Vagina (tissue), 2 donors: ENCODE measurements at regions of chr20 and their contacts with region 1.

Region 1: GRCh38 chr20:49610701-49611538 is 43.0 kb upstream of the PTGIS start:
- DNase-seq: no peak
- H3K4me3 ChIP-seq: peak overlapping the region in 1 of 2 donors; percentile 6
- H3K27ac ChIP-seq: no peak overlapping the region
- H3K4me1 ChIP-seq: peaks cover 10% of the 10 kb centered on the region
- H3K27me3 ChIP-seq: no peaks in the 10 kb centered on the region
- CTCF ChIP-seq: peak; percentile 97 to 100 (median 99)
- POLR2A ChIP-seq: no peak

Region 2: GRCh38 chr20:49338061-49338460 is 272.9 kb before region 1 on chr20:
- intact Hi-C with region 1: loop called (anchors 10 kb)
- DNase-seq: no peak
- H3K4me3 ChIP-seq: no peak overlapping the region
- H3K27ac ChIP-seq: no peak overlapping the region
- H3K4me1 ChIP-seq: no peaks in the 10 kb centered on the region
- H3K27me3 ChIP-seq: no peaks in the 10 kb centered on the region
- CTCF ChIP-seq: no peak
- POLR2A ChIP-seq: no peak

Region 3: DNA sequence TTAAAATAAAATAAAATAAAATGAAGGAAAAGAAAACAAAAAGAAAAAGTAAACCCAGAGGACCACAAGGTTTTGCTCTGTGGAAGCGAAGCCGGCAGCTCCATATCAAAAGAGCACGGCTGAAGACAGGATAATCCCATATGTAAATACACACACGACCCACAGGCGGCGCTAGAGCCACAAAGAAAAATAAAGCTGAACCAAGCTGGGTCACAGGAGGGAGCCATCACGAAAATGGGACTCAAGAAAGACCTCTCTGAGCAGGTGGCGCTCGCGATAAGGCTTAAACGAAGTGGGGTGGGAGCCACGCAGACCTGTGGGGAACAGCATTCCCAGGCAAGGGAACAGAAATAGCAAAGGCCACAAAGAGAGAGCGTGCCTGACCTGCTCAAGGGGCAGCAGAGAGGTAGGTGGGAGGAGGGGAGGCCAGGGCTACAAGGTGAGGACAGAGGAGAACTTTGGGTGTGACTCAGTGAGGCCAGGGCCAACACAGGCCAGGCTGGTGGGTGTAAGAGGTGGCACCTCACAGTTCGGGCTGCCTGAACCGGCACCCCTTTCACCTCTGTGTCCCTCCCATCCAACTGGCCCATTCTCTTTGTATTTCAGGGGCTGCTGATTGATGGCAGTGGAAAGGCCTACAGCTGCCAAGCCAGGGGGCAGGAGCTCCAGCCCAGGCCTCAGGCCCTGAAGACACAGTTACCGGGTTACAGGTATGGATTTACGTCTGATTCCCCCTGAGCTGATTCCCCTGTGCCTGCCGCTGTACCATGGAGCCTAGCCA is 69.0 kb before region 1 on chr20:
- intact Hi-C with region 1: loop called (anchors 2 kb)
- DNase-seq: no peak
- H3K4me3 ChIP-seq: no peak overlapping the region
- H3K27ac ChIP-seq: peak overlapping the region; percentile 5
- H3K4me1 ChIP-seq: no peaks in the 10 kb centered on the region
- H3K27me3 ChIP-seq: no peaks in the 10 kb centered on the region
- CTCF ChIP-seq: peak in 2 of 3 experiments; percentile 72 to 95
- POLR2A ChIP-seq: no peak

Region 4: GRCh38 chr20:49699200-49699992 is 88.5 kb after region 1 on chr20:
- intact Hi-C with region 1: no loop called
- DNase-seq: no peak
- H3K4me3 ChIP-seq: no peak overlapping the region
- H3K27ac ChIP-seq: no peak overlapping the region
- H3K4me1 ChIP-seq: peaks cover 63% of the 10 kb centered on the region
- H3K27me3 ChIP-seq: no peaks in the 10 kb centered on the region
- CTCF ChIP-seq: no peak
- POLR2A ChIP-seq: no peak

Region 5: DNA sequence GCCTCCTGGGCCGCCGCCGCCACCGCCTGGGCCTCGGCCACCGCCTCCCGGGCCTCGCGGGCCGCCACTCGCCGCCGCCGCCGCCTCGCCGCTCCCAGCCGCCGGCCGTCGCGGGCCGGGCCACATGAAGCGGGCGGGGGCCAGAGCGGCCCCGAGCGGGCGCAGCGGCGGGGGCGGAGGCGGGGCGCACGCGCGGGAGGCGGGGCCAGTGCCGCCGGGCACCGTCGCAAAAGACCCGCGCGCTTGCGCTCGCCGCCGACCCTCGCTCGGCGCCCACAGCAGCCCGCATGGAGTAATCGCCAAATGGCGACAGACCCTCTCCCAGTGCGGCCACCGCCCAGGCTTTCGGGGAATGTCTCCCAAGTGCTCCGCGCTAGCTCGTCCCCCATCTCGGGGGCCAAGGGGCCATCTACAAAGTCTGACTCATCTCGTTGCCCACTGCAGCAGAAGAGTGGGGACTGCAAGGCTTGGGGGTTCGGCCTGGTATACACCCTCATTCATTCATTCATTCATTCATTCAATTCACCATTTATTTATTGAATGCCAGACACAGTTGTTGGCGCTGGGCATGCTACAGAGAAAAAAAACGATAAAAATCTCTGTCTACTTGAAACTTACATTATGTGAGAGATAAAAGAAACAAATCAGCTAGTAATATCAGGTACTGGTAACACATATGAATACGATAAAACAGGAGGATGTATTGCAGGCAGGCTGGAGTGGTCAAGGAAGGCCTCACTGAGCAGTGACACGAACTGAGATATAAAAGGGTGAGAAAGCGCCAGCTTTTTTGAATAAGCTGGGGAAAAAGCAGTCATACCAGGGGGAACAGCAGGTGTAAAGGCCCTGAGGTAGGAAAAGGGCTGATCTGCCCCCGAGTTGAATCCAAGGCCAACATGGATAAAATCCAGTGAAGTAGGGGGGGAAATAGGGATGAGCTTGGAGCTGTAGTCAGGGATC is 103.1 kb after region 1 on chr20 and contains the start of gene B4GALT5:
- intact Hi-C with region 1: loop called (anchors 5 kb)
- DNase-seq: no peak
- H3K4me3 ChIP-seq: peak within 1 kb of the TSS; percentile 95
- H3K27ac ChIP-seq: peak within 1 kb of the TSS; percentile 90
- H3K4me1 ChIP-seq: peaks cover 41% of the 10 kb centered on the region
- H3K27me3 ChIP-seq: no peaks in the 10 kb centered on the region
- CTCF ChIP-seq: no peak
- POLR2A ChIP-seq: peak in 1 of 2 donors; percentile 23
- total RNA-seq, gene B4GALT5: 17.9 TPM

Region 6: DNA sequence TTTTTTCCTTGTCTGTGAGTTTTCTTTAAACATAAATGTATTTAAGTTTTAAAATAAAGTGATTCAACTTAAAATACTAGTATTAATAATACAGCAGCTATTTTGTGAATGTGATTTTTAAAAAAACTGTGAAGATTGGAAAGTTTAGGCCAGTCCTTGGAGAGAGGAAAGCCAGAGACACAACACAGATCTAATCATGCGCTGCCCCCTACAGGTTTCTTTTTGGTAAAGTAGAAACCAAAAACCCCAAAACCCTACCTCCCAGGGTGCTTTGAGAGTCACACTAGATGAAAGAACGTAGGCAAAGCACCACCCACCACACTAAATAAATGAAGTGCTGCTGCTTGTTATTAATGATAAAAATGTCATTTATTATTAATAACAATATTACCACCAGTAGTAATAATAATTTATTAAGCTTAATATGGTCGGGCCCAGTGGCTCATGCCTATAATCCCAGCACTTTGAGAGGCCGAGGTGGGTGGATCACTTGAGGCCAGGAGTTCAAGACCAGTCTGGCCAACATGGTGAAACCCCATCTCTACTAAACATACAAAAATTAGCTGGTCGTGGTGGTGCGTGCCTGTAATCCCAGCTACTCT is 235.4 kb after region 1 on chr20:
- intact Hi-C with region 1: loop called (anchors 5 kb)
- DNase-seq: no peak
- H3K4me3 ChIP-seq: no peak overlapping the region
- H3K27ac ChIP-seq: no peak overlapping the region
- H3K4me1 ChIP-seq: peaks cover 11% of the 10 kb centered on the region
- H3K27me3 ChIP-seq: no peaks in the 10 kb centered on the region
- CTCF ChIP-seq: peak in 2 of 3 experiments; percentile 64 to 68
- POLR2A ChIP-seq: no peak